Colonic mucosa (tissue), 4 donors: ENCODE measurements at regions of chr1 and their contacts with region 1.

Region 1: GRCh38 chr1:28359592-28360239 is 9.8 kb upstream of the PHACTR4 start:
- DNase-seq: peak; percentile 82
- H3K4me3 ChIP-seq: no peak overlapping the region
- H3K27ac ChIP-seq: no peak overlapping the region
- H3K4me1 ChIP-seq: no peaks in the 10 kb centered on the region
- H3K27me3 ChIP-seq: no peaks in the 10 kb centered on the region
- CTCF ChIP-seq: peak; percentile 56

Region 2: DNA sequence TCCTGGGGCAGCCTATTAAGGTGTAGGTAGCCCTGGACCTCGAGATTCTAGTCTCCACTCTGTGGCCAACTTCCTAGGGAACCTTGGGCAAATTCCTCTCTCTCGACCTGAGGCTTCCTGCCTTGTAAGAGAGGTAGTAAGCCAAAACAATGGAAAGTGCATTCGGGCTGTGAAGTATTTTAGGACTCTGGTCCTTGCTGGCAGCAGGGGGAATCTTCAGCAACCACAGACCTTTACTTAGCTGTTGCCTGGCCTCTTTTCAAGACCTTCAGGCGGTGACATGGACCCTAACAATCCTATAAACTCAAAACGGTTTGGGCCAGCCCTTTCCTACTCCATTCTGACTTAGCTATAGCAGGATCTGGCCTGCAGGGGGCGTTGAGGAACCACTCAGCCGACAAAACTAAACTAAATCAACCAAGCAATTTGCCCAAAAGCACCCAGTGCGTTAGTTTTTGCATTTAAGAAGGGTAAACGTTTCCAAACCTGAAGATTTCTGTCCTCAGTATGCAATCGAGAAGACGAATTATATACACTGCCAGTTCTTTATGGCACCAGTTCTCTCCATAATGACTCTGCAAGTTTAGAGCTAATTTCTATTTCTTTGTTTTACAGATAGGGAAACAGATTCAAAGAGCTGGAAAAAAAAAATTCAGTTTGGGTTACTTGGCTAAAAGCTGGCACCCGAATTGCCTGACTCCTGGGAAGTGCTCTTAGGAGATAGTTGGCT is 111.3 kb before region 1 on chr1:
- intact Hi-C with region 1: loop called (anchors 5 kb)
- DNase-seq: peak; percentile 93
- H3K4me3 ChIP-seq: peak overlapping the region; percentile 14
- H3K27ac ChIP-seq: peak overlapping the region; percentile 85
- H3K4me1 ChIP-seq: peaks cover 28% of the 10 kb centered on the region
- H3K27me3 ChIP-seq: no peaks in the 10 kb centered on the region
- CTCF ChIP-seq: peak; percentile 94

Region 3: DNA sequence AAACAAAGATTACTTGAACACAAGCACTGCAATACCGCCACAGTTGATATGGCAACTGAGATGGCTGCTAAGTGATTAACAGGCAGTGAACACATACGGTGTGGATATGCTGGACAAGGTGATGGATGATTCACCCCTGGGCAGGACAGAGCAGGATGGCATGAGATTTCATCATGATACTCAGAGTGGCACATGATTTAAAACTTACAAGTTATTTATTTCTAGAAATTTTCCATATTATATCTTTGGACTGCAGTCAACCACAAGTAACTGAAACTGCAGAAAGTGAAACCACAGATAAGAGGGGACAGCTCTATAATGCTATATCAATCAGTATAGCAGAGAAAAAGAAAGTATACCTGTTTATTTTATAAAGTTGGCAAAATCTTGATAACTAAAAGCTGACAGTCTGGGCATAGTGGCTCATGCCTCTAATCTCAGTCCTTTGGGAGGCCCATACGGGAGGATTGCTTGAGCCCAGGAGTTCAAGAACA is 57.8 kb after region 1 on chr1:
- intact Hi-C with region 1: no loop called
- DNase-seq: no peak
- H3K4me3 ChIP-seq: no peak overlapping the region
- H3K27ac ChIP-seq: no peak overlapping the region
- H3K4me1 ChIP-seq: no peaks in the 10 kb centered on the region
- H3K27me3 ChIP-seq: no peaks in the 10 kb centered on the region
- CTCF ChIP-seq: no peak

Region 4: DNA sequence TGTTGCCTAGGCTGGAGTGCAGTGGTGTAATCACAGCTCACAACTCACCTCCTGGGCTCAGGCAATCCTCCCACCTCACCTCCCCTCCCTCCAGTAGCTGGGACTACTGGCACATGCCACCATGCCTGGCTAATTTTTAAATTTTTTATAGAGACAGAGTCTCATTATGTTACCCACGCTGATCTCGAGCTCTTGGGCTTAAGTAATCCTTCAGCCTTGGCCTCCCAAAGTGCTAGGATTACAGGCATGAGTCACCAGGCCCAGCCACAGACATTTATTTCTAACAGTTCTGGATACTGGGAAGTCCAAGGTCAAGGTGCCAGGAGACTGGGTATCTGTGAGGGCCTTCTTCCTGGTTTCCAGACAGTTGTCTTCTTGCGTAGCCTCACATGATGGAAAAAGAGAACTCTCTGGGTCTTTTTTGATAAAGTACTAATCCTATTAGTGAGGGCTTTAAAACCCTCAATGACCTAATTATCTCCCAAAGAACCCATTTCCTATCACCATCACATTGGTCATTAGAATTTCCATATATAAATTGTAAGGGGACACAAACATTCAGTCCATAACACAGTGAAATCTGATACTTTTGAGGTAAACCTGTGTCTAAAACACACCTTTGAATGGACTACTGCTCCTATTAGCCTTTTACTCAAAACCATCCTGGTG is 77.7 kb after region 1 on chr1:
- intact Hi-C with region 1: no loop called
- DNase-seq: peak; percentile 72
- H3K4me3 ChIP-seq: no peak overlapping the region
- H3K27ac ChIP-seq: peak overlapping the region; percentile 69
- H3K4me1 ChIP-seq: no peaks in the 10 kb centered on the region
- H3K27me3 ChIP-seq: no peaks in the 10 kb centered on the region
- CTCF ChIP-seq: no peak

Region 5: DNA sequence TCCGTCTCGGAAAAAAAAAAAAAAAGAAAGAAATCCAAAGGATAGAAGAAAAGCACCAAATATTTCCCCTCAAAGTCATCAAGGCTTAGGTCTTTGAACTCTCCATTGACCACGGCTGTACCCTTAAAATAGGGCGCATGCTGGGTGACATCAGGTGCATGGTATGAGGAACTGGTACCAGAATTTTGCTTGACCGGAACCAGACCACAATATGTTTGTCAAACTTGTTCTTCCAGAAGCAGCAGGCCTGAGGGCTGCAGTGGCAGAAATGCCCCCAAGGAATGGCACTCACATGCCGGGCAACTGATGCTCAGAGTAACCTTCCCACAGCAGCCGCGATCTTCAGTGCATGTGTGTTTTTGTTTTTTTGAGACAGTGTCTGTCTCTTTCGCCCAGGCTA is 167.2 kb after region 1 on chr1:
- intact Hi-C with region 1: no loop called
- DNase-seq: no peak
- H3K4me3 ChIP-seq: no peak overlapping the region
- H3K27ac ChIP-seq: no peak overlapping the region
- H3K4me1 ChIP-seq: no peaks in the 10 kb centered on the region
- H3K27me3 ChIP-seq: no peaks in the 10 kb centered on the region
- CTCF ChIP-seq: no peak